ENCODE measurements at regions of chrX and their contacts with region 1.

Region 1: DNA sequence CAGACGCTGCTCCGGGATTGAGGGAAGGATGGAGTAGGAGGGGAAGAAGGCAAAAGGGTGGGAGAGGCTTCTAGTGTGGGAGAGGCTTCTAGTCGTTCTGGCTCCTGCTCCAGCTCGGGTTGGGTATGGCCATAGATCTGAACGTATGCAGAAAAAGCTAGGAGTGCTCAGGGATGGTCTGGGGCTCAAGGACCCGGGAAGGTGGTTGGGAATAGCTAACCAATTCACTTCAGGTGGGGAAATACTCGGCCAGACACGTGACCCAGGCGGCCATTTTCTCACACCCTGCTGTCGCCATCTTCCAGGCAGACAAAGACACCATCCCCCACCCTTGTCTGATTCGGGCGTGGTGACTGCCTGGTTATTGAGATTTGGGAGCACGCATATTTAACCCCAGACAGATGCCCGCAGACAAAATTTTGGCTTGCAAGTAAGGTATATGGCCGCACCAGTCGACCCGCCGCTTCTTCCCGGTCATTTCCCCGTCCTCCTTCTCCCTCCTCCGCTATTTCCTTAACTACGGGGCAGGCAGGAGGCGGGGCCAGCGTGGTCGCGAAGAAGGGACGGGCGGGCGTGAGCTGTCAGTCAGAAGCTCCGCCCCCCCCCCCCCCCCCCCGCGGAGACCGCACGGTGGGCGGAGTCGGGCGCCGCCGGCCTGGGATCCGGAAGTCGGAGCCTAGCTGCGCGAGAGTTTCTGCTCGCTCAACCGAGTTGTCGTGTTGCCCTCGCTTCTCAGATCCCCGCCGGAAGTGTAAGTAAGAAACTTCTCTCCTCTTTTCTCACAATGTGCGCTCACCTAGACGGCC is at the start of gene GNL3L:
- DNase-seq: peak; percentile 78
- H3K4me3 ChIP-seq: peak within 1 kb of the TSS; percentile 17 to 86 (median 69)
- H3K27ac ChIP-seq: peak within 1 kb of the TSS; percentile 73
- H3K4me1 ChIP-seq: peaks cover 10% of the 10 kb centered on the region
- H3K27me3 ChIP-seq: no peaks in the 10 kb centered on the region
- CTCF ChIP-seq: no peak
- POLR2A ChIP-seq: peak; percentile 79
- total RNA-seq, gene GNL3L: 46.0 and 48.0 TPM in 2 replicates

Region 2: GRCh38 chrX:54509400-54509799 is 20.4 kb before region 1 on chrX:
- CTCF ChIA-PET with region 1: interaction called, 3 read pairs
- POLR2A ChIA-PET with region 1: no interaction called
- dilution Hi-C with region 1: no loop called
- intact Hi-C with region 1: loop called (anchors 1 kb)
- DNase-seq: peak; percentile 60
- H3K4me3 ChIP-seq: no peak overlapping the region
- H3K27ac ChIP-seq: peak overlapping the region; percentile 70
- H3K4me1 ChIP-seq: peaks cover 9% of the 10 kb centered on the region
- H3K27me3 ChIP-seq: no peaks in the 10 kb centered on the region
- CTCF ChIP-seq: no peak
- POLR2A ChIP-seq: no peak

Measured in endothelial cell of umbilical vein (primary cell).